ENCODE measurements at regions of chr5 and their contacts with region 1.

Region 1: DNA sequence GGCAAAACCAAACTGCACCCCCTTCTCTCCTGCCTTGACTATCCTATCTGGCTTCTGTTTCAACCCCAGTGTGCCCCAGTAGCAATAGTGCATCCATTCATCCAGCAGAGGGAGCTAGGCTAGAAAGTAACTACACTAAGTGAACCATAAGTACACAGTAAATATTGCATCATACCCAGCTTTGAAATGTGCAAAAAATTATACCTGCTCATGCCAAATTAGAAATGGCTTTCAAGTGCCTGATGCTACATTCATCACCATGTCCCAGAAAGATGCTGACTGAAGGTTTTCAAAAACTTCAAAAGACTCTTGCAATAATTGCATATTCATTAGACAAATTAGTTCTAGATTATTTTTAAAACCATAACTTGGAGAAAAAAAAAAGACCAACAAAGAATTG is 153.5 kb downstream of the PRELID2 start:
- DNase-seq: peak; percentile 11
- H3K4me3 Mint-ChIP-seq: no peak overlapping the region
- H3K27ac Mint-ChIP-seq: no peak overlapping the region
- H3K4me1 Mint-ChIP-seq: peaks cover 2% of the 10 kb centered on the region
- H3K27me3 Mint-ChIP-seq: no peaks in the 10 kb centered on the region

Region 2: GRCh38 chr5:145130996-145131395 is 550.7 kb before region 1 on chr5:
- intact Hi-C with region 1: no loop called
- DNase-seq: no peak
- H3K4me3 Mint-ChIP-seq: no peak overlapping the region
- H3K27ac Mint-ChIP-seq: no peak overlapping the region
- H3K4me1 Mint-ChIP-seq: no peaks in the 10 kb centered on the region
- H3K27me3 Mint-ChIP-seq: no peaks in the 10 kb centered on the region

Region 3: GRCh38 chr5:145752947-145753346 is 71.3 kb after region 1 on chr5:
- intact Hi-C with region 1: no loop called
- DNase-seq: no peak
- H3K4me3 Mint-ChIP-seq: no peak overlapping the region
- H3K27ac Mint-ChIP-seq: no peak overlapping the region
- H3K4me1 Mint-ChIP-seq: peaks cover 5% of the 10 kb centered on the region
- H3K27me3 Mint-ChIP-seq: no peaks in the 10 kb centered on the region

Region 4: GRCh38 chr5:146130440-146131045 is 448.9 kb after region 1 on chr5:
- intact Hi-C with region 1: loop called (anchors 5 kb)
- DNase-seq: no peak
- H3K4me3 Mint-ChIP-seq: no peak overlapping the region
- H3K27ac Mint-ChIP-seq: no peak overlapping the region
- H3K4me1 Mint-ChIP-seq: no peaks in the 10 kb centered on the region
- H3K27me3 Mint-ChIP-seq: no peaks in the 10 kb centered on the region